Upper lobe of right lung (tissue), 1 donor: ENCODE measurements at regions of chrX and their contacts with region 1.

Region 1: DNA sequence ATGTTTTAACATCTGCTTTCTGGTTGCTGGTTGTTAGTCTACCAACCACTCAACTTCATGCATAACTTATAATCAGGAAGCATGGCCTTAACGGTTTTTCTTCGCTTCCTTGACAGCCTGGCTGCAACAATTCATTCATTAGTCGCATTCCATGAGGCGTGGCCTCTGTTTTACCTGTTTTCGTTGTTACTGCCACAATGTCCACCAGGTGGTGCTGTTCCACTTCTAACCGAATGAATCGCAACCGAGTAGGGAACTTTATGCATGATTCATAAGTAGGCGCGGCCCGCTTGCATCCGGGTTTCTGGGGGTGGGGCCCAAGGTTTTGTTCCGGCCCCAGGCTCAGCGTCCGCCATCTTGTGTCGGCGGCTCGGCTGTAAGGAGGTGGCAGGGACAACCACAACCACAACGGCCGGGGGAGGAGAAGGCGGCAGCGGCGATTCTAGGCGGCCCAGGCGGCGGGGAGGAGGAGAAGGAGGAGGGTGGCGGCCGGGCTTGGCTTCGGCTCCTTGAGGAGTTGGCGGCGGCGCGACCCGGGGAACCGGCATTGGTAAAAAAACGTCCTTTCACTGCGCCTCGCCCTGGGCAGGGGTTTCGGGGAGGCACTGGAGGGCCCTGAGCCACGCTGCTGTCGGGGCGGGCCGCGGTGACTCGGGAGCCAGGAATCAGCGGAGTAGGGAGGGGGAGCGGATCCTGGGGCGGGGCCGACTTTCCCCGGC is at the start of gene UBA1:
- DNase-seq: peak; percentile 94
- ATAC-seq: peak; percentile 93
- H3K4me3 ChIP-seq: peak within 1 kb of the TSS; percentile 68
- H3K27ac ChIP-seq: peak within 1 kb of the TSS; percentile 94
- H3K4me1 ChIP-seq: peaks cover 20% of the 10 kb centered on the region
- H3K27me3 ChIP-seq: no peaks in the 10 kb centered on the region
- CTCF ChIP-seq: peak; percentile 68
- total RNA-seq, gene UBA1: 161 TPM

Region 2: GRCh38 chrX:47068214-47068613 is 125.4 kb before region 1 on chrX:
- intact Hi-C with region 1: no loop called
- DNase-seq: no peak
- ATAC-seq: no peak
- H3K4me3 ChIP-seq: no peak overlapping the region
- H3K27ac ChIP-seq: no peak overlapping the region
- H3K4me1 ChIP-seq: no peaks in the 10 kb centered on the region
- H3K27me3 ChIP-seq: no peaks in the 10 kb centered on the region
- CTCF ChIP-seq: no peak

Region 3: GRCh38 chrX:47384502-47384901 is 190.9 kb after region 1 on chrX:
- intact Hi-C with region 1: loop called (anchors 10 kb)
- DNase-seq: no peak
- ATAC-seq: peak; percentile 92
- H3K4me3 ChIP-seq: no peak overlapping the region
- H3K27ac ChIP-seq: no peak overlapping the region
- H3K4me1 ChIP-seq: no peaks in the 10 kb centered on the region
- H3K27me3 ChIP-seq: no peaks in the 10 kb centered on the region
- CTCF ChIP-seq: peak; percentile 76

Region 4: DNA sequence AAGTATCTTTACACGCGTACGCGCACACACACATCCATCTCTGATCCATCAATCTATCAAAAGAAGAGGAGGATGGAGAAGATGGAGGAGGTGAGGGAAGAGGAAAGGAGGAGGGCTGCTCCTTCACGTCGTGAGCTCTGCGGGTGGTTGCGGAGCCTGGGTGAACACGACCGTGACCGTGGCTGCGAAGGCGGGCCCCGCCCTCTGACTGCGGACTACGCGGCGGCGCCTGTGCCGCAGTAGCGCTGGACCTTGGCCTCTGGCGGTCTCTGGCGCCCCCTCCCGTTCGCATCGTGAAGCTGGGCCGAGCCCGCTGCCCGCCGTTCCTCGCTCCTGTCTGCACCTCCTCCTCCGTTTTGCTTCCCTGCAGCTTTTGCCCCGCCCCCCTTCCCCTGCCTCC is 329.7 kb after region 1 on chrX:
- intact Hi-C with region 1: loop called (anchors 10 kb)
- DNase-seq: peak; percentile 90
- ATAC-seq: peak; percentile 100
- H3K4me3 ChIP-seq: peak overlapping the region; percentile 52
- H3K27ac ChIP-seq: no peak overlapping the region
- H3K4me1 ChIP-seq: no peaks in the 10 kb centered on the region
- H3K27me3 ChIP-seq: no peaks in the 10 kb centered on the region
- CTCF ChIP-seq: peak; percentile 80